ENCODE measurements at regions of chr22 and their contacts with region 1.

Region 1: GRCh38 chr22:30444632-30445437 is 19.3 kb downstream of the MTFP1 start:
- DNase-seq: peak in 1 of 2 experiments; percentile 53
- H3K4me3 ChIP-seq: no peak overlapping the region
- H3K27ac ChIP-seq: no peak overlapping the region
- H3K4me1 ChIP-seq: peaks cover 9% of the 10 kb centered on the region
- H3K27me3 ChIP-seq: no peaks in the 10 kb centered on the region
- CTCF ChIP-seq: peak; percentile 91

Region 2: GRCh38 chr22:29798801-29799680 is 645.8 kb before region 1 on chr22:
- CTCF ChIA-PET with region 1: no interaction called
- POLR2A ChIA-PET with region 1: interaction called, 13 read pairs
- intact Hi-C with region 1: no loop called
- DNase-seq: peak; percentile 90 to 98
- H3K4me3 ChIP-seq: peak overlapping the region; percentile 44; the same call in 1 of the 2 replicates
- H3K27ac ChIP-seq: peak overlapping the region; percentile 93
- H3K4me1 ChIP-seq: peaks cover 76% of the 10 kb centered on the region
- H3K27me3 ChIP-seq: no peaks in the 10 kb centered on the region
- CTCF ChIP-seq: no peak

Region 3: DNA sequence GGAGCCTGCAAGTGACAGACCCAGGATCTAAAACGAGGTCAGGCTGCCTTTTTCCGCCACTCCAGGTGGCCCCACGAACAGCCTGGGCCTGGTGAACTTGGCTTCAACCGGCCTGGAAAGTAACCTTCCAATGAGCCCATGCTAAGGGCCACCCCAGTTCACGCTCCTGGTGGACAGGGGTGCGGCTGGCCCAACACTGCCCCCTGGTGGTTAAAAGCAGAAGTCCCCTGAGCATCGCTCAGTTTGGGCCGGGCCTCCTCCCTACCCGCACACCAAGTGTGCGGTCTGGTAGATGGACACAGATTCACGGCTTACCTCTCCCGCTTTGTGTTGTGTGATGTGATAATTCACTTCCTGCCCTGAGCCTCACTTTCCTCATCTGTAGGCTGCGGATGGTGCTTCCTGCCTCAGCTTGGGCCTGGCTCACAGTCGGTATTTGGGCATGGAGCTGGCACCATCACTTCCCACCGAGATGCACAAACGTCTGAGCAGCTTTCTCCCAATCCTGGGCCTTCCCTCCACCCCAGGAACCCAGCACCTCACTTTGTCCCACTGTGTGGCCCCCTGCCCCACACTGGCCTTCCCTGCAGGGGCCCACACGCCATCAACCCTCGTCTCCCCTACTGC is 40.6 kb after region 1 on chr22:
- CTCF ChIA-PET with region 1: interaction called, 5 read pairs
- POLR2A ChIA-PET with region 1: no interaction called
- intact Hi-C with region 1: loop called (anchors 2 kb)
- DNase-seq: peak; percentile 49 to 69
- H3K4me3 ChIP-seq: no peak overlapping the region
- H3K27ac ChIP-seq: no peak overlapping the region
- H3K4me1 ChIP-seq: no peaks in the 10 kb centered on the region
- H3K27me3 ChIP-seq: no peaks in the 10 kb centered on the region
- CTCF ChIP-seq: peak; percentile 99

Measured in PC-9 (cell line).